ENCODE measurements at regions of chr5 and their contacts with region 1.

Region 1: DNA sequence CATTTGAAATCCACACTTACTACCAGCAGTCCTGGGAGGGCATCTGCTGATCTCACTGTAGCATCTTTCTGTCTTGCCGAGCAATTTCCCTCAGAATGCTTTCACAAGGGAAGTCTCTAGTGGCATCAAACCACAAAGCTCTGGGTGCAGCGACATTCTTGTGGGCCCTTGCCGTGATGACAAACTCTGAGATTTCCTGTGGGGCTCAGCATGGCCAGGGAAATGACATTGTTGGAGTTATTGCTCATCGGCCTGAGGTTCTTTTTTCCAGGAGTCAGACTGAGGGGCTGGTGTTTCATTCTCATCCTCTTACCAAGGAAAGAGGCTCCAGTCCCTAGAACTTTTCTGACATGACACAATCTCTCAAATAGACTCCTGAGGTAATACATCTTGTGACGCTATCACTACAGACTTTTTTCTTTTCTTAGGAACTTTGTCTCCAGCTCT is 51.4 kb downstream of the PFDN1 start:
- DNase-seq: peak; percentile 94
- ATAC-seq: peak; percentile 81
- H3K4me3 ChIP-seq: no peak overlapping the region
- H3K27ac ChIP-seq: peak overlapping the region; percentile 3; the same call in 1 of the 2 replicates
- H3K4me1 ChIP-seq: peaks cover 26% of the 10 kb centered on the region
- H3K27me3 ChIP-seq: no peaks in the 10 kb centered on the region
- CTCF ChIP-seq: no peak
- POLR2A ChIP-seq: no peak
- RAD21 ChIP-seq: no peak

Region 2: DNA sequence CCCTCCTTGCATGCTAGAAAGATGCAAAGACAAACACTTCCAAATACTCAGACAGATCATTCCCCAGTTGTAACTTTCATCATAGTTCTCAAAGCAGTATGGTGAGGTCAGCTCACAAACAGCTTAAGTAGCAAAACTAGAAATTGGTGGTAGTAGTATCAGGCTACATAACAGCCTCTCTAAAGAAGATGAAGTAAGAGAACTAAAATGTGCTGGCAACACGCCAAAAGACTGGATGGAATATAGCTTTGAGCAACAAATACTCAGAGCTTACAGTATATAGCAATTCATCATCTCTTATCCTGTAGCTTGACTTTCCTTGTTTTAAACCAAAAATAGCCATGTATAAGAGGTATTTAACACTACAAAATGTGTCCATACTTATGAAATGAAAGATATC is 43.9 kb after region 1 on chr5:
- CTCF ChIA-PET with region 1: no interaction called
- POLR2A ChIA-PET with region 1: no interaction called
- dilution Hi-C with region 1: no loop called
- in situ Hi-C with region 1: no loop called
- intact Hi-C with region 1: loop called (anchors 2 kb)
- DNase-seq: peak; percentile 99
- ATAC-seq: peak; percentile 86
- H3K4me3 ChIP-seq: no peak overlapping the region
- H3K27ac ChIP-seq: no peak overlapping the region
- H3K4me1 ChIP-seq: peaks cover 11% of the 10 kb centered on the region
- H3K27me3 ChIP-seq: no peaks in the 10 kb centered on the region
- CTCF ChIP-seq: no peak
- POLR2A ChIP-seq: no peak
- RAD21 ChIP-seq: no peak

Region 3: GRCh38 chr5:140351609-140352334 is 100.2 kb after region 1 on chr5:
- CTCF ChIA-PET with region 1: interaction called, 233 read pairs
- POLR2A ChIA-PET with region 1: no interaction called
- dilution Hi-C with region 1: no loop called
- in situ Hi-C with region 1: no loop called
- intact Hi-C with region 1: no loop called
- DNase-seq: peak; percentile 70
- ATAC-seq: peak; percentile 83
- H3K4me3 ChIP-seq: no peak overlapping the region
- H3K27ac ChIP-seq: no peak overlapping the region
- H3K4me1 ChIP-seq: no peaks in the 10 kb centered on the region
- H3K27me3 ChIP-seq: no peaks in the 10 kb centered on the region
- CTCF ChIP-seq: peak; percentile 85
- POLR2A ChIP-seq: no peak
- RAD21 ChIP-seq: peak; percentile 84